Dorsolateral prefrontal cortex (tissue), 120 donors: ENCODE measurements at regions of chr7 and their contacts with region 1.

Region 1: GRCh38 chr7:82362129-82362706 is 81.4 kb downstream of the CACNA2D1 start:
- DNase-seq: no peak
- H3K4me3 ChIP-seq: no peak overlapping the region
- H3K27ac ChIP-seq: peak overlapping the region in 45 of 59 donors; percentile 0 to 75 (median 38)
- H3K27me3 ChIP-seq: no peaks in the 10 kb centered on the region
- CTCF ChIP-seq: no peak

Region 2: GRCh38 chr7:82234457-82235049 is 127.7 kb before region 1 on chr7:
- intact Hi-C with region 1: loop called in 1 of 2 experiments (anchors 10 kb)
- DNase-seq: no peak
- H3K4me3 ChIP-seq: no peak overlapping the region
- H3K27ac ChIP-seq: peak overlapping the region in 1 of 59 donors; percentile 23
- H3K27me3 ChIP-seq: no peaks in the 10 kb centered on the region
- CTCF ChIP-seq: peak; percentile 56 to 92 (median 74)